ENCODE measurements at regions of chr11 and their contacts with region 1.

Region 1: DNA sequence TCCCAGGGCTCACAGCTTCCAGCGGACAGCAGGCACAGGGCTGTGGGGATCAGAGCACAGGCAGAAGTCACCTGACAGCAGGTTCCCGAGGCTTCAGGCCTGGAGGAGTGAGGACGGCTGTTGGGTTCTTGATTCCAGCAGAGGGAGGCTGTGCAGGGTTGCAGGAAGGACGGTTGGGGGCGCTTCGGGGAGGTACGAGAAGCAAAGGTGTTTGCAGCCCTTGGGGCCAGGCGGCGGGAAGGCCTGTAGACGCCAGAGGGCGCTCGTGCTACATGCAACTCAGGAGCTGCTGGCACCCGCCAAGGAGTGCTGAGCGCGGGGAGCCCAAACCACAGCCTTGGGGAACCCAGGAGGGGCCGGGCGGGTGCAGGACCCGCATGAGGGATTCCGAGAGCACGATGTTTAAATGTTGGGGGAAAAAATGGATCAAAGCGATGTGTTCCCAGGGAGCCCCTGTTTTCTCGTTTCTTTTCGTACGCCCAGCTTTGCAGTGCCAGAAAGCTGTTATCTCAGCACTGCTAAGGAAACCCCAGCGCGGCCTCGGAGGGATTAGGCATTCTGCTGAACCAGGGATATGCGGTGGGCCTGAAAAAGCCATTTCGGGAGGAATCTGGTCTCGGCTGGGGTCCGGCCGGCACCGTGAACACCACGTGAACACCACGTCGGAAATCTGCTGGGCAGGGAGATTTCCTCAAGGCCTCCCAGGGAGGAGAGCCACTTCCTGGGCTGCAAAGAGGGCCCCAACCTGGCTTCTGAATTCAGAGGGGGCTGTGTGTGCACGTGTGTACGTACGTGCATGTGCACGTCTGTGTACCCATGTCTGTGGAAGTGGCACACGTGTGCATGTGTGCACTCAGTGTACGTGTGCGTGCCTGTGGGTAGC is 88.1 kb downstream of the KCNQ1 start:
- DNase-seq: peak; percentile 94 to 96 (median 94)
- H3K4me3 ChIP-seq: peak overlapping the region in 4 of 7 experiments; percentile 43 to 59 (median 51)
- H3K27ac ChIP-seq: no peak overlapping the region
- H3K4me1 ChIP-seq: peaks cover 3 to 50% (median 40%) of the 10 kb centered on the region in 4 experiments
- H3K27me3 ChIP-seq: no peaks in the 10 kb centered on the region

Region 2: DNA sequence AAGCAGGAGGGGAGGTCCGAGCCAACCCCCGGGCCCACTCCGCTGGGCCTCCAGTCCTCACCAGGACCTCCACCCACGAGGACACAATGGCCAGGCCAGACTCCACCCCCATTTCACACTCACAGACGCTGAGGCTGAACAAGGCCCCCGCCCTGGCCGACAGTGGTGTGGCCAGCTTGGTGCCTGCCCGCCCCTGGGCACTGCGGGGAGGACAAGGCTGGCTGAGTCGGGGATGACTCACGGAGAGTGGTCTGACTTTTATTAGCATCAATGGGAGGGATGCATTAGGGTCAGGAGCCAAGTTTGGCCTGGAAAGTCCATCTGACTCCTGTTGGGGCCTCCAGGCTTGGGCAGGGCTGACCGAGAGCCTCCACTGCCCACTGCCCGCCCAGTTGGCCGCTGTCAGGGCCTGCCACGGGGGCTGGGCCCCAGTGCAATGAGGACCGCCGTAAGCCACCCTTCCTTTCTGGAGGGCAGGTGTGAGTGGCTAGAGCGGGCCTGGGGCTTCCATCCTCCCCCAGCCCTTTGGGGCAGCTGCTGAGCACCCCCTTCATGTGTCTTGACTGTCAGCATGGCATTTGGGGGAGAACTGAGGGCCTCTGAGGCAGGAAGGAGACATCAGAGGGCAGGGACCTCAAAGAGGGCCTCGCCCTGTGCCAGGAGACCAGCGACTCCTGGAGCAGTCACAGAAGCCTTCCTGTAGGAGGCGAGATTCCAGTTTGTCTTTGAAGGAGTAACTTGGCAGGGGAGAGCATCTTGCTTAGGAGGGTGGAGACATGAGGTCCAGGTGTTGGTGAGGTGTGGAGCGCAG is 220.5 kb before region 1 on chr11:
- CTCF ChIA-PET with region 1: no interaction called
- POLR2A ChIA-PET with region 1: no interaction called
- DNase-seq: no peak
- H3K4me3 ChIP-seq: no peak overlapping the region
- H3K27ac ChIP-seq: no peak overlapping the region
- H3K4me1 ChIP-seq: peaks cover 0 to 37% (median 20%) of the 10 kb centered on the region in 4 experiments
- H3K27me3 ChIP-seq: no peaks in the 10 kb centered on the region

Region 3: DNA sequence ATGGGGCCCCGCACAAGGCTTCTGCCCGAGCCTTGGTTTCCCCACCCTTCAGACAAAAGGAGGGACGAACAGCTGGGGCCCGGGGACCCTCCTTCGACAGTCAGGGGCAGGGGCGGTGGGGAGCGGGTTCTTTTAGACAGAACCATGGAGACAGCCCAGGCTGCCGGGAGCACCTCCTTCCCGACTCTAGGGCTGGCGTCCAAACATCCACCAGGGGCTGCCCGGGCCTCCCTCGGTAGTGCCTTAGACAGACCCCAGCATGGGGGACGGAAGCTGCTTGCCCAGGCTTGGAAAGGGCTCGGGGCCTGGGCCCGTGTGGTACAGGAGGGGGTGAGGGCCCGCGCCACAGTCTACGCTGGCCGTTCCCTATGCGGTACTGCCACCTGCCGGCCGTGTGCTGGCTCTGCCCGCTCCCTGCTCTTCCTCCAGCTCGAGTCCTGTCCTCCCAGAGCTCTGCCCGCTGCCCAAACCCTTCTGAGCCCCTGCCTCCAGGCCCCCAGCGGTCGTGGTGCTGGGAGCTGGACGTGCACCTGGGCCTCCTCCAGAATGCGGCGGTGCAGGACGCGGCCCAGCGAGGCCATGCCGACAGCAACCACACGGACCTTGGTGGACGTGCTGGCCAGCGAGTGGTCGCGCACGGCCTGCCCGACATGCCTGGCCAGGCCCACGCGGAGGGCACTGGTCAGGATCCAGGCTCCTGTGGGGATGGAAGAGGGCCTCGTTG is 112.3 kb before region 1 on chr11:
- CTCF ChIA-PET with region 1: interaction called, 284 read pairs
- POLR2A ChIA-PET with region 1: interaction called, 5 read pairs
- DNase-seq: peak; percentile 71 to 84 (median 81)
- H3K4me3 ChIP-seq: no peak overlapping the region
- H3K27ac ChIP-seq: no peak overlapping the region
- H3K4me1 ChIP-seq: peaks cover 0 to 10% (median 9%) of the 10 kb centered on the region in 4 experiments
- H3K27me3 ChIP-seq: no peaks in the 10 kb centered on the region

Region 4: DNA sequence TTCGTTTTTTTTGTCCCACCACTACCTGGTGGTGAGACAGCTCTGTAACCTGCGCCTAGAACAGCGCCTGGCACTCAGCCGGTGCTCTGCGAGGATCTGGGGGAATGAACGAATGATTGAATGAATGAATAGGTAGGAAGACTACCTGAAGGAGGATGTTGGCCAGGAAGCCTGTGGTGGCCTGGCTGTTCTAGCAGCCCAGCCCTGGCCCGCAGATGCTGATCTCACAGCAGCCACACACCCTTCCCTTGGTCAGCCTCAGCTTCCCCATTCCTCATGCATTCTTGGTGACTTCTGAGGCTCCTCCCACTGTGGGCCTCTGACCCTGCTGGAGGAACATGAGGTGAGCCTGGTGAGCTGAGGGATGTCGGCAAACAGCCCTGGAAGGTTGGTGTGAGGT is 92.3 kb before region 1 on chr11:
- CTCF ChIA-PET with region 1: interaction called, 12 read pairs
- POLR2A ChIA-PET with region 1: no interaction called
- DNase-seq: peak in 1 of 3 donors; percentile 36
- H3K4me3 ChIP-seq: no peak overlapping the region
- H3K27ac ChIP-seq: no peak overlapping the region
- H3K4me1 ChIP-seq: peaks cover 0 to 20% (median 16%) of the 10 kb centered on the region in 4 experiments
- H3K27me3 ChIP-seq: peaks cover 0 to 24% (median 6%) of the 10 kb centered on the region in 5 experiments

Region 5: GRCh38 chr11:2691991-2692875 is 159.3 kb after region 1 on chr11:
- CTCF ChIA-PET with region 1: interaction called, 12 read pairs
- POLR2A ChIA-PET with region 1: no interaction called
- DNase-seq: peak; percentile 29 to 58 (median 51)
- H3K4me3 ChIP-seq: no peak overlapping the region
- H3K27ac ChIP-seq: no peak overlapping the region
- H3K4me1 ChIP-seq: peaks cover 1 to 50% (median 26%) of the 10 kb centered on the region in 4 experiments
- H3K27me3 ChIP-seq: no peaks in the 10 kb centered on the region

Region 6: DNA sequence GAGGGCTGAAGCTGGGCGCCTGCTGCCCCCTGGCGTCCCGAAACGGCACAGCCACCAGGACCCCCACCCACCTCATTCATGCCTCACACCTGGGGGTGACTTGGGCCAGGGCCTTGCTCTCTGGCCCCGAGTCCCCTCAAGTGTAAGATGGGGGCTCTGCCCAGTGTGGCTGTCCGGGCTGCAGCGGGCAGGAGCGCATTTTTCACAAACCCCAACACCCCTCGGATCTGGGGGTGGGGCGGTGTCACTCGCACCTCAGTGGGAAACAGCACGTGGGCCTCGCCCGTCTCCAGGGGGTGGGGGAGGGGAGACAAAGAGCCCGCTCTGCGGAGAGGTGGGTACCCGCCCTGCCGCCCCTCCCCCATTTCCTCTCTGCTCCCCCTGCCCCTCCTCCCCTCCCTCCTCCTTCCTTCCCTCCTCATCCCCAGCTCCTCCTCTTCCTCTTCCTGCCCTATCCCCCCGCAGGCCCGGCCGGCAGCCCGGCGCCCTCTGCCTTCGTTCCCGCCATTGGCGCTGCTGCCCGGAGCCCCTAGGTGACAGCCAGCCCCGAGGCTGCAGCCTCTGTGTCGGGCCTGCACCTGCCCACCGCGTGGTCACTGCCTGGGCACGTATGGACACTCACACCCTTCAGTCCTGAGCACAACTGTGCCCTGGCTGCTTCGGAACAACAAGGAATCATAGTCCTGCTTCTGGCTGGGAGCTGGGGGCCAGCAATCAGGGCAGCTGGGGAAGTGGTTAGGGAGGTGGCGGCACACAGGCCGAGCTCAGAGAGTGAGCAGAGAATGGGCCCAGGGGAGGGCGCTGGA is 359.5 kb after region 1 on chr11:
- CTCF ChIA-PET with region 1: interaction called, 462 read pairs
- POLR2A ChIA-PET with region 1: interaction called, 30 read pairs
- DNase-seq: peak; percentile 48 to 75 (median 72)
- H3K4me3 ChIP-seq: peak overlapping the region; percentile 7 to 69 (median 53)
- H3K27ac ChIP-seq: peak overlapping the region in 1 of 2 experiments; percentile 54
- H3K4me1 ChIP-seq: peaks cover 0 to 35% (median 30%) of the 10 kb centered on the region in 4 experiments
- H3K27me3 ChIP-seq: no peaks in the 10 kb centered on the region

Region 7: DNA sequence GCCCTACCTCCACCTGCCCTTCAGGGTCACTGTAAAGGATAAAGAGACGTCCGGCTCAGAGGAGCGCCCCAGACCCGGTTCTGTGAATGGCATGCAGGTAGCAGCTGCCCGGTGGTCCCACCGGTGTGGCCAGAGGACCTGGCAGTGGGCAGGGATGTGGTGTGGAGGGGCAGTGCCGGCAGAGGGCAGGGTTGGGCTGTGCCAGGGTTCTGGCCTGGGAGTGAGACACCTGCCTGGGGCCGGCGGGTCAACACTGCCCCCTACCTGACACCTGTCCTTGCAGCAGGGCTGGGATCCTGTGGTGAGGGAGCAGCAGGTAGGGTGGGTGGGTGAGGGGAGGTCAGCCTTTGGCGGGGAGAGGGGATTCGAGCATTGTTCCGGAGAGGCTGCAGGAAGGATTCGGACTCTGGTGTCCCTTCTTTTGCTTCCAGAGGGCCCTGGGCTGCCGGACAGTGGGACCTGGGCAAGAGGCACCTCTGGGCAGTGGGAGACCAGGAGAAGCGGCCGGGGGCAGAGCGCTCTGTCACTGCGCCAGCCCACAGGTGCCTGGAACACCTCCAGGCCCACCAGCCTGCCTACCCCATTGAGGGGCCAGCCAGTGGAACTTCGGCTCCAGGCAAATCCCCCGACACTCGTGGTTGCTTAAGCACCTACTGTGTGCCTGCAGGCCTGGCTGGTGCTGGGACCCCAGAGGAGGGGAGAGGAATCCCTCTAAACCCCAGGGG is 397.9 kb after region 1 on chr11:
- CTCF ChIA-PET with region 1: interaction called, 42 read pairs
- POLR2A ChIA-PET with region 1: interaction called, 5 read pairs
- DNase-seq: peak in 2 of 3 donors; percentile 26 to 34
- H3K4me3 ChIP-seq: peak overlapping the region in 5 of 7 experiments; percentile 19 to 68 (median 47)
- H3K27ac ChIP-seq: no peak overlapping the region
- H3K4me1 ChIP-seq: peaks cover 0 to 59% (median 53%) of the 10 kb centered on the region in 4 experiments
- H3K27me3 ChIP-seq: peaks cover 0 to 46% (median 15%) of the 10 kb centered on the region in 5 experiments